ENCODE measurements at regions of chr10 and their contacts with region 1.

Region 1: GRCh38 chr10:16777473-16778370 is 39.5 kb downstream of the RSU1 start:
- DNase-seq: peak in 1 of 2 donors; percentile 85
- ATAC-seq: peak; percentile 58 to 77 (median 62)
- H3K4me3 ChIP-seq: no peak overlapping the region
- H3K4me3 Mint-ChIP-seq: no peak overlapping the region
- H3K27ac ChIP-seq: no peak overlapping the region
- H3K27ac Mint-ChIP-seq: peak overlapping the region; percentile 35 to 64
- H3K4me1 ChIP-seq: peaks cover 12% of the 10 kb centered on the region
- H3K4me1 Mint-ChIP-seq: peaks cover 25 to 34% of the 10 kb centered on the region in 2 donors
- H3K27me3 ChIP-seq: no peaks in the 10 kb centered on the region
- H3K27me3 Mint-ChIP-seq: no peaks in the 10 kb centered on the region
- CTCF ChIP-seq: peak; percentile 78

Region 2: DNA sequence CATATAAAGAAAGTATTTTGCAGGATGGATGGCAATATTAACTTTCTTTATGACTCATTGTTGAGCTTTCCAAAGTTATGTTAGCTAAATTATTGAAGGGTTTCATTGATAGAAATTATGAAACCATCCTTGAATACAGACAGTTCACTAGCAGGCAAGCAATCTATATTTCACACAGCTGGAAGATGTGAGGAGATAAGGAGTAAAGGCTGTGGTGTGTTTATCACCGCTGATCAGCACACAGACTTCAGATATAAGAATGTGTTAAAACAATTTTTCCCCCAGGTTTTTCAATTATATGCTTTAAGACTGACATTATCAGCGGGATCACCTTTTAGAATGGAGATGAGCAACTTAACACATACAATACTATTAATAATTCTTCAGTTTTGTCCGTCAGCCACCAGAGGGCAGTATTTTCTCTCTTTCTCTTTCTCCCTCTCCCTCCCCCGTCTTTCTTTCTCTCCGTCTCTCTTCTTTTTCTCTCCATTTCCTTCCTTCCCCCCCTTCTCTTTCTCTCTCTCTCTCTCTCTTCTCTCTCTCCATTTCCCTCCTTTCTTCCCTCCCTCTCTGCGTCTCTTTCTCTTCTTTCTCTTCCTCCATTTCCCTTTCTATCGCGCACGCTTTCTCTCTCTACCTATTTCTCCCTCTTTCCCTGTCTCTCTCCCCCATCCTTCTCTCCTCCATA is 1343.7 kb before region 1 on chr10:
- intact Hi-C with region 1: loop called (anchors 5 kb)
- DNase-seq: peak in 1 of 2 donors; percentile 80
- ATAC-seq: peak in 2 of 3 donors; percentile 57 to 74
- H3K4me3 ChIP-seq: no peak overlapping the region
- H3K4me3 Mint-ChIP-seq: peak overlapping the region; percentile 97
- H3K27ac ChIP-seq: no peak overlapping the region
- H3K27ac Mint-ChIP-seq: peak overlapping the region in 1 of 2 donors; percentile 13
- H3K4me1 ChIP-seq: no peaks in the 10 kb centered on the region
- H3K4me1 Mint-ChIP-seq: peaks cover 13% of the 10 kb centered on the region in 2 donors
- H3K27me3 ChIP-seq: peaks cover 2% of the 10 kb centered on the region
- H3K27me3 Mint-ChIP-seq: peaks cover 0 to 13% of the 10 kb centered on the region in 2 donors
- CTCF ChIP-seq: peak; percentile 87

Region 3: DNA sequence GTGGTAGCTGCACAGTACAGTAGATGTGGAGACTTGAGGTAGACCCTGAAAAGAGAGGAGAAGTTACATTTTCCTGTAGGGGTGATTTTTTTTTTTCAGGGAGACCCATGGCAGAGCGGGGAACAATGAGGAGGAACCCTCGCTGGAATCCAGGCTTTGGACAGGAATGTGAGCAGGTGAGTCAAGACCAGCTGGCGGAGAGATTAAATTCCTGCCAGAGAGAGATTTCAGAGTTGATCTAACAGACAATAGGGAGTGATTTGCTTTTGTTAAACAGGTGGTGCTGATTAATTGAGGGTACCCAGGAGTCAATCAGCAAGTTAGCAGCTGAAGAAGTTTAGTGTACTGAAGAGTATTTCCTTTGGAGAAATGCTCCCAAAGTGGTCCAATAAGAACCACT is 875.8 kb before region 1 on chr10:
- intact Hi-C with region 1: loop called (anchors 1 kb)
- DNase-seq: no peak
- ATAC-seq: no peak
- H3K4me3 ChIP-seq: no peak overlapping the region
- H3K4me3 Mint-ChIP-seq: no peak overlapping the region
- H3K27ac ChIP-seq: no peak overlapping the region
- H3K27ac Mint-ChIP-seq: no peak overlapping the region
- H3K4me1 ChIP-seq: no peaks in the 10 kb centered on the region
- H3K4me1 Mint-ChIP-seq: no peaks in the 10 kb centered on the region
- H3K27me3 ChIP-seq: no peaks in the 10 kb centered on the region
- H3K27me3 Mint-ChIP-seq: peaks cover 13 to 30% of the 10 kb centered on the region in 2 donors
- CTCF ChIP-seq: no peak

Region 4: GRCh38 chr10:16116404-16117304 is 661.1 kb before region 1 on chr10:
- intact Hi-C with region 1: loop called (anchors 5 kb)
- DNase-seq: peak in 1 of 2 donors; percentile 3
- ATAC-seq: no peak
- H3K4me3 ChIP-seq: no peak overlapping the region
- H3K4me3 Mint-ChIP-seq: no peak overlapping the region
- H3K27ac ChIP-seq: no peak overlapping the region
- H3K27ac Mint-ChIP-seq: no peak overlapping the region
- H3K4me1 ChIP-seq: no peaks in the 10 kb centered on the region
- H3K4me1 Mint-ChIP-seq: no peaks in the 10 kb centered on the region
- H3K27me3 ChIP-seq: no peaks in the 10 kb centered on the region
- H3K27me3 Mint-ChIP-seq: peaks cover 2 to 6% of the 10 kb centered on the region in 2 donors
- CTCF ChIP-seq: no peak